Dendritic cell treated with granulocyte-macrophage colony-stimulating factor and Interleukin-4, amounts not matched to agents 40 ng/mL and 50 ng/mL, for 4 days (primary cell): ENCODE measurements at regions of chr10 and their contacts with region 1.

Region 1: DNA sequence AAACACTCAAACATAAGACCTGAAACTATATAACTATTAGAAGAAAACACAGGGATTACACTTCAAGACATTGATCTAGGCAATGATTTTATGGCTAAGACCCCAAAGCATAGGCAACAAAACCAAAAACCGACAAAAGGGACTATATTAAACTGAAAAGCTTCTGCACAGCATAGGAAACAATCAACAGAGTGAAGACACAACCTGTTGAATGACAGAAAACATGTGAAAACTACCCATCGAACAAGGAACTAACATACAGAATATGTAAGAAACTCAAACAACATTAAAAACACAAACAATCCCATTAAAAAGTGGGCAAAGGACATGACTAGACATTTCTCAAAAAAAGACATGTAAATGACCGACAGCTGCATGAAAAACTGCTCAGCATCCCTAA is 109.0 kb downstream of the ALOX5 start:
- H3K4me3 Mint-ChIP-seq: no peak overlapping the region
- H3K27ac Mint-ChIP-seq: no peak overlapping the region
- H3K4me1 Mint-ChIP-seq: no peaks in the 10 kb centered on the region
- H3K27me3 Mint-ChIP-seq: no peaks in the 10 kb centered on the region

Region 2: GRCh38 chr10:45433716-45434469 is 49.1 kb before region 1 on chr10:
- intact Hi-C with region 1: no loop called
- H3K4me3 Mint-ChIP-seq: no peak overlapping the region
- H3K27ac Mint-ChIP-seq: peak overlapping the region; percentile 45
- H3K4me1 Mint-ChIP-seq: peaks cover 63% of the 10 kb centered on the region
- H3K27me3 Mint-ChIP-seq: no peaks in the 10 kb centered on the region

Region 3: DNA sequence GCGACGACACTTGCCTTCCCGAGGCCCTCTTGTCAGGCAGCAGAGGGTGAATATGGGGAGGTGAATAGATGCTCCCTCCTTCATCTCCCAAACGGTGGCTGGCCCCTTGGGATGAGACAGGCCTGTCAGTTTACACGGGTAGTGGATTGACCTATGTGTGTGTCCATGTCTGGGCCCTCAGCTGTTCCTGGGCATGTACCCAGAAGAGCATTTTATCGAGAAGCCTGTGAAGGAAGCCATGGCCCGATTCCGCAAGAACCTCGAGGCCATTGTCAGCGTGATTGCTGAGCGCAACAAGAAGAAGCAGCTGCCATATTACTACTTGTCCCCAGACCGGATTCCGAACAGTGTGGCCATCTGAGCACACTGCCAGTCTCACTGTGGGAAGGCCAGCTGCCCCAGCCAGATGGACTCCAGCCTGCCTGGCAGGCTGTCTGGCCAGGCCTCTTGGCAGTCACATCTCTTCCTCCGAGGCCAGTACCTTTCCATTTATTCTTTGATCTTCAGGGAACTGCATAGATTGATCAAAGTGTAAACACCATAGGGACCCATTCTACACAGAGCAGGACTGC is 37.6 kb before region 1 on chr10:
- intact Hi-C with region 1: no loop called
- H3K4me3 Mint-ChIP-seq: no peak overlapping the region
- H3K27ac Mint-ChIP-seq: no peak overlapping the region
- H3K4me1 Mint-ChIP-seq: peaks cover 15% of the 10 kb centered on the region
- H3K27me3 Mint-ChIP-seq: peaks cover 3% of the 10 kb centered on the region

Region 4: GRCh38 chr10:45526309-45526905 is 43.4 kb after region 1 on chr10:
- intact Hi-C with region 1: loop called (anchors 5 kb)
- H3K4me3 Mint-ChIP-seq: no peak overlapping the region
- H3K27ac Mint-ChIP-seq: no peak overlapping the region
- H3K4me1 Mint-ChIP-seq: no peaks in the 10 kb centered on the region
- H3K27me3 Mint-ChIP-seq: no peaks in the 10 kb centered on the region